ENCODE measurements at regions of chr16 and their contacts with region 1.

Region 1: GRCh38 chr16:68264128-68265077 is at the start of gene SLC7A6:
- DNase-seq: peak in 1 of 2 experiments; percentile 86
- H3K4me3 ChIP-seq: peak within 1 kb of the TSS; percentile 78 to 97 (median 84)
- H3K27ac ChIP-seq: no peak within 1 kb of the TSS
- H3K4me1 ChIP-seq: peaks cover 0 to 3% (median 2%) of the 10 kb centered on the region in 4 experiments; a peak in 5 of 7 replicates
- H3K27me3 ChIP-seq: peaks cover 0 to 11% (median 1%) of the 10 kb centered on the region in 4 experiments; a peak in 3 of 7 replicates
- CTCF ChIP-seq: peak; percentile 61 to 69 (median 69)
- EP300 ChIP-seq: no peak
- POLR2A ChIP-seq: no peak; a peak in 1 of 3 replicates
- RAD21 ChIP-seq: peak in 1 of 2 experiments; percentile 41; a peak in 2 of 4 replicates
- total RNA-seq, gene SLC7A6: 29.2 and 37.8 TPM in 2 replicates

Region 2: GRCh38 chr16:68179855-68180254 is 84.5 kb before region 1 on chr16:
- CTCF ChIA-PET with region 1: no interaction called
- POLR2A ChIA-PET with region 1: no interaction called
- DNase-seq: no peak
- H3K4me3 ChIP-seq: no peak overlapping the region
- H3K27ac ChIP-seq: no peak overlapping the region
- H3K4me1 ChIP-seq: no peaks in the 10 kb centered on the region
- H3K27me3 ChIP-seq: no peaks in the 10 kb centered on the region
- CTCF ChIP-seq: no peak
- EP300 ChIP-seq: no peak
- POLR2A ChIP-seq: no peak
- RAD21 ChIP-seq: no peak

Region 3: DNA sequence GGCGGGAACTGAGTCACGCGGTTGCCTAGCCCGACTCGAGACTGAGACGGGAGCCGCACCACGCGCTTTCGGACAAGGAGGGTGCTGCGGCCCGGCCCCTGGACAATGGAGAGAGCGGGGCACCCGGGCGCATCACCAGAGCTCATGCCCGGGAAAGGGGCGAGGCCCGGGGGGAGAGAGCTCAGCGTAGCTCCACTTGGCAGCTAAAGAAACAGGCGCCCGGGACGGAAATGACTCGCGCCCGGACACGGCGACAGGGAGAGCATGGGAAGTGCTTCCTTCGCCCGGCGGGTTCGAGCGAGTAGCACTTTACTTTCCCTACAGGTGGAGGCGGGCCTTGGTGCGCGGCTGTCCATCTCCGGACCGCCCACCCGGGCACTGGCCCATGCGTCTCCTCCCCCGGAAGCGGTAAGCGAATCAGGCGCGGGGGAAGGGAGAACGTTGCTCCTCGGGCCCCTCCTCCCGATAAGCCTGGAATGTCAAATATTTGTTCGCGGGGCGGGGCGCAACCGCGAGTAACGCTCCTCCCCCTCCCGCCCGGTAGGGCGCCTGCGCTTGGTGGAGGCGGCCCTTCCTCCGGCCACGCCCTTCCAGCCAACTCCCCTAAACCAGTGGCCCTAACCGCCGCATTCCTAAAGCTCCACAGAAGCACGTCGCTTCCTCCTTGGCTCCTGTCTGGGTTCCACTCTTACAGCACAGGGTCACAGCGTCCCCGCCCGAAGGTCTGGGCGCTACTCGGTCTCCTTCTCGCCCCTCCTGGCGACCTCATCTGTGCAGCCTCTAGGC is 27.0 kb before region 1 on chr16:
- CTCF ChIA-PET with region 1: interaction called, 80 read pairs
- POLR2A ChIA-PET with region 1: interaction called, 15 read pairs
- DNase-seq: peak; percentile 97 to 99
- H3K4me3 ChIP-seq: peak overlapping the region; percentile 59 to 85 (median 82)
- H3K27ac ChIP-seq: peak overlapping the region; percentile 84
- H3K4me1 ChIP-seq: peaks cover 0 to 28% (median 20%) of the 10 kb centered on the region in 4 experiments; a peak in 5 of 7 replicates
- H3K27me3 ChIP-seq: no peaks in the 10 kb centered on the region
- CTCF ChIP-seq: no peak
- EP300 ChIP-seq: peak in 1 of 2 experiments; percentile 24; a peak in 1 of 3 replicates
- POLR2A ChIP-seq: peak; percentile 71 to 97
- RAD21 ChIP-seq: no peak

Region 4: DNA sequence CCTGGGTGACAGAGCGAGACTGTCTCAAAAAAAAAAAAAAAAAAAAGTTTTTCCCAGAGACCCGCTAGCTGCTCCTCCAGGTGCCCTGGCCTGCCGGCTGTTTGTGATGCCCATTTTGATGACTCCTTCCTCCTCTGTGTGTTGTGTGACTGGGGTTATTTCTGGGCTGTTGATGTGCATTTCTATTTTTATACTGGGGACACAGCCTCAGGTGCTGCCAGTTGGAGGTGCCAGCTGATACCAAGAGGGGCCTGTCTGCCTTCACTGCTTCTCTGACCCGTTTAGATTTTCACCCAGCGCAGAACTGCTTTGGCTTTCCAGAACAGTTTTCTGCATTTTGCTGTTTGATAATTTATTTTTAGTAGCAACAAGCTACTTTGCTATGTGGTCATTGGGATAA is 12.6 kb before region 1 on chr16:
- CTCF ChIA-PET with region 1: interaction called, 108 read pairs
- POLR2A ChIA-PET with region 1: interaction called, 10 read pairs
- DNase-seq: no peak
- H3K4me3 ChIP-seq: no peak overlapping the region
- H3K27ac ChIP-seq: no peak overlapping the region
- H3K4me1 ChIP-seq: no peaks in the 10 kb centered on the region
- H3K27me3 ChIP-seq: no peaks in the 10 kb centered on the region; a peak in 1 of 7 replicates
- CTCF ChIP-seq: no peak
- EP300 ChIP-seq: no peak
- POLR2A ChIP-seq: no peak
- RAD21 ChIP-seq: no peak

Region 5: GRCh38 chr16:68289621-68290329 is 25.4 kb after region 1 on chr16:
- CTCF ChIA-PET with region 1: interaction called, 233 read pairs
- POLR2A ChIA-PET with region 1: interaction called, 9 read pairs
- DNase-seq: no peak
- H3K4me3 ChIP-seq: no peak overlapping the region
- H3K27ac ChIP-seq: no peak overlapping the region
- H3K4me1 ChIP-seq: no peaks in the 10 kb centered on the region
- H3K27me3 ChIP-seq: no peaks in the 10 kb centered on the region
- CTCF ChIP-seq: no peak
- EP300 ChIP-seq: no peak
- POLR2A ChIP-seq: no peak
- RAD21 ChIP-seq: no peak

Region 6: GRCh38 chr16:68310761-68311511 is 46.5 kb after region 1 on chr16 and contains the starts of genes PRMT7 and SLC7A6OS:
- CTCF ChIA-PET with region 1: interaction called, 221 read pairs
- POLR2A ChIA-PET with region 1: interaction called, 22 read pairs
- DNase-seq: peak; percentile 67 to 93
- H3K4me3 ChIP-seq: peak within 1 kb of the TSS; percentile 69 to 96 (median 86)
- H3K27ac ChIP-seq: peak within 1 kb of the TSS; percentile 87
- H3K4me1 ChIP-seq: peaks cover 3 to 6% (median 4%) of the 10 kb centered on the region in 4 experiments; a peak in 5 of 7 replicates
- H3K27me3 ChIP-seq: no peaks in the 10 kb centered on the region
- CTCF ChIP-seq: peak in 2 of 3 experiments; percentile 14 to 24; a peak in 2 of 4 replicates
- EP300 ChIP-seq: no peak
- POLR2A ChIP-seq: peak; percentile 58 to 95
- RAD21 ChIP-seq: peak in 1 of 2 experiments; percentile 22; a peak in 1 of 4 replicates
- total RNA-seq, gene PRMT7: 48.2 and 48.7 TPM in 2 replicates
- total RNA-seq, gene SLC7A6OS: 16.4 and 21.3 TPM in 2 replicates

Region 7: DNA sequence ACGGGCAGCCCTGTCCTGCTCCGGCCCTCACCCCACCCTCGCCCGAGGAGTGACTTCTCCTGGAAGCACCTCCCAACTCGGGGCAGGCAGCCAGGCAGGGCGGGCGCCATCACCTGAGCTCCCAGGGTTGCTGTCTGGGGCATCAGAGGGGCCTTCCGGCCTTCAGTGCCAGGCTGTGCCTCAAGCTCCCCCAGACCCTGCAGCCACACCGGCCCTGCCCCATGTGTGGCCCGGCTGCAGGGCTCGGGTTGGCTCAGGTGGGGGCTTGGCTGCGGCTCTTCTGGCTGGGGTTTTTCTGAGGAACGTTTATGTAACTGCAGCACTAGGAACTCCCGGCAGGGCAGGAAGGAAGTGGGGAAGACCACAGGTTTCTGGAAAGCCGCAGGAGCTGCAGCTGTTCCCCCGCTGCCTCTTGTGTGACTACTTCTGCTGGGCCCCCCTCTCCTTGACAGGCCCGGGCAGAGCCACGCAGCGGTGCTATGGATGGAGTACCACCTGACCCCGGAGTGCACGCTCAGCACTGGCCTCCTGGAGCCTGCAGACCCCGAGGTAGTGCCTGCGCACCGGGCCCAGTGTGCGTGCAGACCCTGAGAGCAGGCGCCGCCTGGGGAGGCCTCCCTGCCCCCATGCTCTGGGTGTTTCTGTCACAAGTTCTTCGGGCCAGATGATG is 92.0 kb after region 1 on chr16:
- CTCF ChIA-PET with region 1: interaction called, 31 read pairs
- POLR2A ChIA-PET with region 1: interaction called, 7 read pairs
- DNase-seq: no peak
- H3K4me3 ChIP-seq: no peak overlapping the region
- H3K27ac ChIP-seq: no peak overlapping the region
- H3K4me1 ChIP-seq: no peaks in the 10 kb centered on the region
- H3K27me3 ChIP-seq: no peaks in the 10 kb centered on the region
- CTCF ChIP-seq: no peak
- EP300 ChIP-seq: no peak
- POLR2A ChIP-seq: no peak
- RAD21 ChIP-seq: no peak

Measured in H1 (cell line).